ENCODE measurements at regions of chr7 and their contacts with region 1.

Region 1: GRCh38 chr7:105830391-105831301 is 45.8 kb downstream of the ATXN7L1 start:
- DNase-seq: no peak
- ATAC-seq: no peak
- H3K4me3 ChIP-seq: no peak overlapping the region
- H3K27ac ChIP-seq: no peak overlapping the region
- H3K4me1 ChIP-seq: no peaks in the 10 kb centered on the region; the same call in 1 of the 2 replicates
- H3K27me3 ChIP-seq: peaks cover 2 to 4% of the 10 kb centered on the region in 2 experiments; a peak in 3 of 4 replicates
- CTCF ChIP-seq: no peak
- EP300 ChIP-seq: no peak
- POLR2A ChIP-seq: no peak
- RAD21 ChIP-seq: no peak

Region 2: GRCh38 chr7:105816266-105816828 is 14.3 kb before region 1 on chr7:
- CTCF ChIA-PET with region 1: interaction called, 7 read pairs
- POLR2A ChIA-PET with region 1: no interaction called
- RAD21 ChIA-PET with region 1: interaction called, 3 read pairs
- SMC1A ChIA-PET with region 1: interaction called, 12 read pairs
- in situ Hi-C with region 1: no loop called
- intact Hi-C with region 1: no loop called
- DNase-seq: no peak
- ATAC-seq: peak; percentile 61
- H3K4me3 ChIP-seq: no peak overlapping the region
- H3K27ac ChIP-seq: no peak overlapping the region
- H3K4me1 ChIP-seq: peaks cover 11% of the 10 kb centered on the region
- H3K27me3 ChIP-seq: no peaks in the 10 kb centered on the region; a peak in 1 of 4 replicates
- CTCF ChIP-seq: no peak
- EP300 ChIP-seq: no peak
- POLR2A ChIP-seq: no peak
- RAD21 ChIP-seq: no peak

Measured in GM12878 (cell line).